CD8-positive, alpha-beta memory T cell (primary cell): ENCODE measurements at regions of chr1 and their contacts with region 1.

Region 1: GRCh38 chr1:26864610-26865527 is 1.9 kb downstream of the SFN start:
- DNase-seq: peak; percentile 91 to 95 (median 94)
- H3K4me3 ChIP-seq: peak overlapping the region; percentile 97
- H3K4me3 Mint-ChIP-seq: peak overlapping the region; percentile 88 to 97 (median 93)
- H3K27ac ChIP-seq: peak overlapping the region; percentile 83
- H3K27ac Mint-ChIP-seq: peak overlapping the region; percentile 73 to 98 (median 92)
- H3K4me1 ChIP-seq: peaks cover 11% of the 10 kb centered on the region
- H3K4me1 Mint-ChIP-seq: peaks cover 14 to 28% (median 27%) of the 10 kb centered on the region in 3 donors
- H3K27me3 ChIP-seq: no peaks in the 10 kb centered on the region
- H3K27me3 Mint-ChIP-seq: no peaks in the 10 kb centered on the region

Region 2: GRCh38 chr1:26546375-26546774 is 318.5 kb before region 1 on chr1:
- CTCF ChIA-PET with region 1: no interaction called
- POLR2A ChIA-PET with region 1: no interaction called
- DNase-seq: no peak
- H3K4me3 ChIP-seq: peak overlapping the region; percentile 98
- H3K4me3 Mint-ChIP-seq: peak overlapping the region; percentile 72 to 93 (median 91)
- H3K27ac ChIP-seq: peak overlapping the region; percentile 77
- H3K27ac Mint-ChIP-seq: peak overlapping the region; percentile 92 to 98 (median 96)
- H3K4me1 ChIP-seq: peaks cover 72% of the 10 kb centered on the region
- H3K4me1 Mint-ChIP-seq: peaks cover 65 to 75% (median 73%) of the 10 kb centered on the region in 3 donors
- H3K27me3 ChIP-seq: no peaks in the 10 kb centered on the region
- H3K27me3 Mint-ChIP-seq: no peaks in the 10 kb centered on the region

Region 3: GRCh38 chr1:26853156-26853555 is 11.7 kb before region 1 on chr1:
- CTCF ChIA-PET with region 1: interaction called, 15 read pairs
- POLR2A ChIA-PET with region 1: interaction called, 5 read pairs
- DNase-seq: peak; percentile 56 to 85 (median 66)
- H3K4me3 ChIP-seq: no peak overlapping the region
- H3K4me3 Mint-ChIP-seq: no peak overlapping the region
- H3K27ac ChIP-seq: no peak overlapping the region
- H3K27ac Mint-ChIP-seq: peak overlapping the region in 4 of 8 donors; percentile 17 to 79 (median 68)
- H3K4me1 ChIP-seq: no peaks in the 10 kb centered on the region
- H3K4me1 Mint-ChIP-seq: peaks cover 0 to 4% (median 3%) of the 10 kb centered on the region in 3 donors
- H3K27me3 ChIP-seq: no peaks in the 10 kb centered on the region
- H3K27me3 Mint-ChIP-seq: peaks cover 0 to 3% of the 10 kb centered on the region in 2 donors